ENCODE measurements at regions of chr19 and their contacts with region 1.

Region 1: DNA sequence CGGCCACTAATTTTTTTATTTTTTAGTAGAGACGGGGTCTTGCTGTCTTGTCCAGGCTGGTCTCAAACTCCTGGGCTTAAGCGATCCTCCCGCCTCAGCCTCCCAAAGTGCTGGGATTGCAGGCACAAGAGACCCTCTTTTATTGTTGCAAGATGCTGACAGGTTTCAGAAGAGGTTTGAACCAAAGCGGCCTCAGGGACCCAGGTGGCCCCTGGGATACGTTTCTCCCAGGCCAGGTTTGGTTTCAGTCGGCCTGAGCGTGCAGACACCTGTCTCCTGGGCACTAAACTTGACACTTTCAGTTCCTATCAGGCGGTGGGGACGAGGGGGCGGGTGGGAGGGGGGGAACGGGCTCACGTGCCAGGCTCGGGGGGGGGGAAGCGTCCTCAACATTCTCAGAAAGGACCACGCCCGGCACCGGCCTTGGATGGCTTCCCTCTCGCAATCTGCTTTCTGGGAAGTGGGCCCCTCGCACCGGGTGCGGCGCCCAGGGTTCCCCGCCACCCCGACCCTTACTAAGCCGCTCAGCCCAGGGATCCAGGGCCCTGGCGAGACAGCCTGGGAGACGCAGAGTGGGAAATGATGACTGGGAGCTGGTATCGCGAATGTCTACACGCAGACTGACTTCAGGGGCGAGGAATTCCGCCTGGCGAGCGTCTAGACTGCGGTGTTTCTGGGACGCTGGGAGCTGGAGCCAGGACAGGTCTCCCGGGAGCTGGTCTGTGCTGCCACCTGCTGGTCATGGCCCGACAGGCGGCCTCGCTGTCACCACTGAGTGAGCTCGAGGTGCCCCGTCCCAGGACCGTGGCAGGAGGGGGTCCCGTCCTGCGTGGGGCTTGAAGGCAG is 91.6 kb downstream of the GNG7 start:
- DNase-seq: peak; percentile 93
- H3K4me3 Mint-ChIP-seq: peak overlapping the region; percentile 79
- H3K27ac Mint-ChIP-seq: no peak overlapping the region
- H3K4me1 Mint-ChIP-seq: peaks cover 55% of the 10 kb centered on the region
- H3K27me3 Mint-ChIP-seq: peaks cover 61% of the 10 kb centered on the region

Region 2: GRCh38 chr19:2391118-2391725 is 219.6 kb before region 1 on chr19:
- CTCF ChIA-PET with region 1: interaction called, 19 read pairs
- DNase-seq: peak; percentile 56
- H3K4me3 Mint-ChIP-seq: no peak overlapping the region
- H3K27ac Mint-ChIP-seq: no peak overlapping the region
- H3K4me1 Mint-ChIP-seq: peaks cover 24% of the 10 kb centered on the region
- H3K27me3 Mint-ChIP-seq: peaks cover 38% of the 10 kb centered on the region

Region 3: DNA sequence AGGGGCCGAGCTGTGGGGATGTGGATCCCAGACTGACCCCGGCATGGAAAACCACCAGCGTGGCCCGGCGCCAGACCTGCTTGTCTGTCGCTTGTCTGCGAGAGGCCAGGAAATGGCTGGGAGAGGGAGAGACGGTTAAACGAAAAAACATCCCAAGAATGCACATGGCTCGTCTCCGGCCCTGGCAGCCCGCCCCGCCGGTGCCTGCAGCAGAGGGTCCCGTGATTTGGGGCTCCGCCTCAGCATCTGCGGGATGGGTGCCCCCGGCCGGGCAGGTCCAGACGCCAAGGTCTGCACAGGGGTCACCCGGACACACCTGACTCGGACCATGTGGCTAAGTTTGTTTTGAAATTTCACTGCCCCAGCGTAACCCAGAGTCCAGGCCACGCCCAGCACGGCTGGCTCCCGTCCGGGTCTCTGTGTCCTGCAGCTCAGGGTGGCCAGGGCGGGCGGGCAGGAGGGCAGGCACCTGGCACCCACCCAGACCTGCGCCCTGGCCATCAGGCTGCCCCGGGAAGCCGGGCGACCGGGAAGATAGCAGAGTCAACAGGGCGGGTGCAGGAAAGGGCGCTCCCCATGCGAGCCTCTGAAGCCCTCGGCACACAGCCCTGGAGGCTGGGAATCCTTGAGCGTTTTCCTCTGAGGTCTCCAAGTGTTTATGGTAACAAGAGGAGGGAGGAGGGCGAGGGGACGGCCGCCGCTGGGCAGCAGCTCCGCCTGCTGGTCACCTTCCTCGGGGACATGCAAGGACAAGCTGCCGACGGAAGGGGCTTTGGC is 31.8 kb before region 1 on chr19:
- CTCF ChIA-PET with region 1: interaction called, 16 read pairs
- DNase-seq: peak; percentile 85
- H3K4me3 Mint-ChIP-seq: peak overlapping the region; percentile 33
- H3K27ac Mint-ChIP-seq: no peak overlapping the region
- H3K4me1 Mint-ChIP-seq: peaks cover 13% of the 10 kb centered on the region
- H3K27me3 Mint-ChIP-seq: peaks cover 48% of the 10 kb centered on the region

Measured in activated naive CD4-positive, alpha-beta T cell treated with anti-CD3 and anti-CD28 coated beads, Interleukin-2, amount 10 ng/mL, durations not matched to agents 7 days and 5 days (primary cell).